Activated T-helper 1 cell treated with anti-CD3 and anti-CD28 coated beads, Interleukin-12 subunit alpha, Interleukin-12 subunit beta, Interleukin-2, Interleukin-4 antibody, amounts not matched to agents 30 ng/mL and 10 ng/mL and 1 ng/mL, durations not matched to agents 14 hours and 24 hours and 36 hours (primary cell): ENCODE measurements at regions of chr10 and their contacts with region 1.

Region 1: GRCh38 chr10:8053446-8054290 is 820 bp upstream of the GATA3 start:
- DNase-seq: peak; percentile 90
- H3K4me3 Mint-ChIP-seq: peak overlapping the region; percentile 99
- H3K27ac Mint-ChIP-seq: peak overlapping the region; percentile 99
- H3K4me1 Mint-ChIP-seq: peaks cover 44% of the 10 kb centered on the region
- H3K27me3 Mint-ChIP-seq: peaks cover 22% of the 10 kb centered on the region

Region 2: DNA sequence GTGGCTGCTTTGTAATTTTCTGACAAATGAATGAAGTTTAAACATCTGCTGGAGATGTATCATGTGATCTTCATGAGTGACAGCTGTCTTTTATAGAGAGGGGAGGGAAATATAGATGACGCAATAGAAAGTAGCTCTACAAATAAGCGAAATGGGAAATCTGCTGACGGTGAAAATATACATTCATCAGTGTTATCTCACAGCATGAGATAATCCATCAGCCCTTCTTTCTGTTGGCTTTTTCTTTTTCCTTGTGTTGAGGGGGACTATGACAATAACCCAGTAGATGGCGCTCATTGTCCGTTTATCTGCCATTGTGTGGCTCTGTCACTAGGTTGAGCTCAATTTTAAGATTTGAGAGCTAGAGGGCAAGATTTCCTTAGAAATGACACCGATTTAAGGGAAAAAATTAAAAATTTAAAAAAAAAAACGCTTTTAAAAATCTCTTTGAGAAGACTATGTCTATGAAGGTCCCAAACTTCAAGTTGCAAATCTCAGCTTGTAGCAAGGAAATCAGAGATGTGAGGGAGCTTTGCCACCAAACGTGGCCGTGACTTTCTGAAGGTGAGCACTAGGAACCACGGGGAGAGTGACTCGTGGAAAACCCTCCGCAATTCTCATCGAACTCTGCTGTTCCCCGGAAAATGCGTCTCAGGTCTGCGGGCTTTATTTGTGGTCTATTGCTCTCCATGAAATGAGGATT is 528.2 kb before region 1 on chr10:
- intact Hi-C with region 1: loop called (anchors 10 kb)
- DNase-seq: peak; percentile 56
- H3K4me3 Mint-ChIP-seq: no peak overlapping the region
- H3K27ac Mint-ChIP-seq: peak overlapping the region; percentile 6
- H3K4me1 Mint-ChIP-seq: peaks cover 15% of the 10 kb centered on the region
- H3K27me3 Mint-ChIP-seq: peaks cover 13% of the 10 kb centered on the region

Region 3: DNA sequence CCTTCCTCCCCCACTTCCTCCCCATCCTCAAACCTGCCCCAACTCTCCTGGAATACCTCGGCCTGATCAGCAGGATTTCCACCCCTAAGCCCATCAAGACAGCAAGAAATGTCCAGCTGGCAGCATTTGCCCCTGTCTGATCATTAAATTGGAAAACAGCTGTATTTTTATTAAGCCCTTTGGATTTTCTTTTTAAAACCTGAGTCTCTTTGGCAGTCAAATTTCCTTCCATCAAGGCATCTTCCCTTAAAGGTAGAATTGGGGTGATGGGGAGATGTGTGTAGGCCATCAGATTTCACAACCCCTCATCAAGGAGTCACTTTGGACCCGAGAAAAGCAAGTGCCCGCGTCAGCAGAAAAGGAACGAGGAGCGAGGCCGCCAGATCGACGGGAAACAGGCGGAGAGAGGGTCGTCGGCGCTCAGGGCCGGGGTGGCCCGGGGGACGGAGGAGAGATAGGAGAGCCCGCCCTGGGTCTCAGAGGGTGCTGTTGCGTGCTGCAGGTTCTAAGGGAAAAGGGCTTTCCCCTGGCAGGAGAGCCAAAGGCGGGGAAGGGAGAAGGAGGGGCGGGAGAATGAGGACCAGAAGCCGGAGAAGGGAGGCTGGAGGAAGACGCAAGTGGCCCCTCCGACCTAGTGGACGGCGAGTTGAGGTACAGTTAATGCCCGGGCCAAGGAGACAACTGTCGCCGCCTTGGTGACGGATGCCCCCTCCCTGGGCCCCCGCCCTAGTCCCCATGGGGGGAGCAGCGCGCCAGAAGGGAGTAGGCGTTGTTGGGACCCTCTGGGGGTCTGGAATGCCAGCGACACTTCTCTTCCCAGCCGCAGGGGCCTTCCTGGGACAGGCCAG is 10.7 kb before region 1 on chr10:
- intact Hi-C with region 1: loop called (anchors 1 kb)
- DNase-seq: no peak
- H3K4me3 Mint-ChIP-seq: no peak overlapping the region
- H3K27ac Mint-ChIP-seq: peak overlapping the region; percentile 71
- H3K4me1 Mint-ChIP-seq: peaks cover 73% of the 10 kb centered on the region
- H3K27me3 Mint-ChIP-seq: peaks cover 95% of the 10 kb centered on the region

Region 4: DNA sequence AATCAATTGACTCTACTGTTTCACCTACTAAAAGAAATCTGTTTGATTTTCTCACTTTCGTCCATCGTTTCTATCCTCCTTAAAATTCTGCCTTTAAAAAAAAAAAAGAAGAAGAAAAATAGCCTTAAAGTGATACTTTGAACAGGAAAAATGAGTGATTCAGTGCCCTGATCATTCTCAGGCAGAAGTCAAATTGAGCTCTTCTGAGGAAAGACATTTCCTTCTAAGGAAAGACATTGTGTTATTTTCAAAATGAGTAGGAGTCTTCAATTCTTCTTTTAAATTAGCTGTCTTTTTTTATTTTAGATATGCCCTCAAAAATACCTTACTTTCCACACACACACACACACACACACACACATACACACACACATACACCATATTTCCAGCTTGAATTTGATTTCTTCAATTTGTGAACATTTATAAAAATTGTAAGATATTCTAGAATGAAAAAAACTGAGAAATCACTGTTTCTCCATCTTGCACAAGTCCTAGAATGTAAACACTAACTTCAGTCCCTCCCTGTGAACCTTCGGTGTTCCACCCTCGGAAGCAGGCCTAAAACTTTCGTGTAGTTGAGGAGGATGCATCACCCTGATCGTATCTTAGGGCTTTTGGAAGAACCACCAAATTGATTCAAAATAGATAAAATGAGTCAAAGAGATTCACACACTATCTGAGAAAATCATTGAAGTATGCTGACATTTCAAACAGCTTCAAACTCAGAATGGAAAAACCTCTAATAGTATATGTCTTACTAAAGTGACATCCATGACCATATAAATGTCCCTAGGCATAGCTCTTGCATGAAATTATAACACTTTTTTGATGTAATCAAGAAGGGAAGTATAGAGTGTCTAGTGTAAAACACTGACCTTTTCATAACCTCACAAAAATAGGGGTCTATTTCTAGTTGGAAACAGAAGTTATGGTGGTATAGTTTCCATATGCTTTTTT is 271.6 kb after region 1 on chr10:
- intact Hi-C with region 1: loop called (anchors 1 kb)
- DNase-seq: no peak
- H3K4me3 Mint-ChIP-seq: peak overlapping the region; percentile 63
- H3K27ac Mint-ChIP-seq: peak overlapping the region; percentile 85
- H3K4me1 Mint-ChIP-seq: peaks cover 57% of the 10 kb centered on the region
- H3K27me3 Mint-ChIP-seq: peaks cover 15% of the 10 kb centered on the region

Region 5: DNA sequence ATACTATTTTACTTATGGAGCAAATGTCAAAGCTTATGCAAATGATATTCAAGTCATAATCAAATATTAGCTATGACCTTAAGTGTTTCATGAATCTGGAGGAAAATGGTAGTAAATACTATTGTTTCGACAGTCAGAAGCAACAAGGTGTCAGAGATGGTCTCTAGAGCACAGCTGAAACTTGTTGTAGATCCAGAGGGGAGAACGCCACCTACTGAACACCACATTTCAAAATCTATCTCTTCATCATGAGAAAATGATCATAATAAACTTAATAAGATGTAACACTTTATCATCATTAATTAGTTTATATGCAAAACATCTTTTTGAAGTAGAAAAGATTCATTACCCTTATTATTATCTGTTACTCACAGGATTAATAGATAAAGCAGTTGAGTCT is 419.5 kb after region 1 on chr10:
- intact Hi-C with region 1: loop called (anchors 1 kb)
- DNase-seq: peak; percentile 5
- H3K4me3 Mint-ChIP-seq: no peak overlapping the region
- H3K27ac Mint-ChIP-seq: no peak overlapping the region
- H3K4me1 Mint-ChIP-seq: peaks cover 8% of the 10 kb centered on the region
- H3K27me3 Mint-ChIP-seq: peaks cover 33% of the 10 kb centered on the region

Region 6: DNA sequence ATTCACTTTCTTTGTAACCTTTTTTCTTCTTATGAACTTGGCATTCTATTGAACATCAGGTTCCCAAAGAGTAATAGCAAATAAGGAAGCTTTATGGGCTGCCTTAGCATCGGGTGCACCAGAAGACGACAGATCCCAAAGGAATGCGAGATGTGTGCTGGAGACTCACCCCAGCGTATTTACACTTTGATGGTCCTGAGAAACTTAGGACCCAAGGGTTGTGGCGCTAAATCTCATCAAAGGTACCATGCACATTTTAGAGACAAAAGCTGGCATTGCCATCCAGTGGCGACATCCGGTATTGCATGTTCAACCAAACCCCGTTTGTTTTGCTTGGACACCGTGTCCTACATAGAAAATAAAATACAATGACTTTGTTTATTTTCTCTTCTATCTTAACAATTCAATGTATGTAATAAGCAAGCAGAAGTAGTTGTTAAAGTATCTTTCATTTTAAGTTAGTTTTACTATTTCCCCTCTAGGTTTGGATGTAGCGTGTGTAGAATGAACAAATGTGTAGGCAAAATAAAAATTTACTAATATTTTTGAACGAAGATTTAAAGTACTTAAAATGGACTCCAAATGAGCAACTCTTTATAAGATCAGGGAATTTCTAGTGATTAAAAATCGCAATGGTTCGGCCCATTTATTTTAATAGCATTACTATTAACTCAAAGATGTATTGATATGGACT is 1155.6 kb after region 1 on chr10:
- intact Hi-C with region 1: loop called (anchors 1 kb)
- DNase-seq: peak; percentile 48
- H3K4me3 Mint-ChIP-seq: no peak overlapping the region
- H3K27ac Mint-ChIP-seq: no peak overlapping the region
- H3K4me1 Mint-ChIP-seq: no peaks in the 10 kb centered on the region
- H3K27me3 Mint-ChIP-seq: peaks cover 17% of the 10 kb centered on the region